H1 (cell line): ENCODE measurements at regions of chr22 and their contacts with region 1.

Region 1: DNA sequence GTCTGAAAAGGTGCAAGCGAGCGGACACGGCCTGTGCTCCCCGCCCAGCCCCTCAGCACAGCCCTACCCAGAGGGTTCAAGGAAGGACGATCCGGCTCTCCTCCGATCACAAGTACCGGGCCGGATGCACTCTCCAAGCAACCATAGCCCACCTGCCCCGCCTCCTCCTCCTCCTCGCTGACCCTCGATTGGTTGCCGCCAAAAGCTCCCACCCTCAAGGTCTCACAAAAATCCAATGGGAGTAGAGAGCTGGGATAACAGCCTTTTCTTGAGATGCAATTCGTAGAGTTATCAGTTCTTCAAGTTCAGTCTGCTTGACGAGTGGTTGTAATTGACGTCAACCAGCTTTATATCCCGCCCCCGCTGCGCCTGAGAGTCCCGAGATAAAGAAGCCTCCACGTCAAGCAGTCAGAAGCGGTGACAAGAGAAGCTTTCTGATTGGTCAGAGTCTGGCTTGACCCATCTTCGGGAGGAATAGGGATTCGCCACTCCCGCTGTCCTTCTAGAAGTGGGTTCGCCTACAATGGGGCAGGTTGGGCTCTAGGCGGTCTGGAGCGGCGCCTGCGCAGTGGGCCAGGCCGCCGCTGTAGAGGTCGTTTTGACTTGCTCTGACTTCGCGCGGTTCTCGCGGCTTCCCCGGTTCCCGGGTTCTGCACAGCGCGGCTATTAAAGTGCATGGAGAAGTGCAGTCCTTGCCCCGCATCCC is at the start of gene IFT27:
- DNase-seq: peak; percentile 92 to 98
- H3K4me3 ChIP-seq: peak within 1 kb of the TSS; percentile 80 to 96 (median 85)
- H3K27ac ChIP-seq: no peak within 1 kb of the TSS
- H3K4me1 ChIP-seq: peaks cover 0 to 4% (median 4%) of the 10 kb centered on the region in 4 experiments; a peak in 6 of 7 replicates
- H3K27me3 ChIP-seq: peaks cover 0 to 10% (median 7%) of the 10 kb centered on the region in 4 experiments; a peak in 4 of 7 replicates
- CTCF ChIP-seq: no peak
- EP300 ChIP-seq: no peak
- POLR2A ChIP-seq: peak in 1 of 2 experiments; percentile 59; a peak in 1 of 3 replicates
- RAD21 ChIP-seq: no peak
- total RNA-seq, gene IFT27: 44.0 and 46.2 TPM in 2 replicates

Region 2: GRCh38 chr22:36546092-36546804 is 229.9 kb before region 1 on chr22:
- CTCF ChIA-PET with region 1: interaction called, 20 read pairs
- POLR2A ChIA-PET with region 1: no interaction called
- DNase-seq: peak; percentile 51 to 65
- H3K4me3 ChIP-seq: peak overlapping the region in 1 of 4 experiments; percentile 18; a peak in 2 of 8 replicates
- H3K27ac ChIP-seq: no peak overlapping the region
- H3K4me1 ChIP-seq: peaks cover 0 to 12% (median 3%) of the 10 kb centered on the region in 4 experiments; a peak in 4 of 7 replicates
- H3K27me3 ChIP-seq: no peaks in the 10 kb centered on the region; a peak in 2 of 7 replicates
- CTCF ChIP-seq: peak; percentile 78 to 89 (median 81)
- EP300 ChIP-seq: no peak
- POLR2A ChIP-seq: no peak
- RAD21 ChIP-seq: peak; percentile 89 to 90

Region 3: DNA sequence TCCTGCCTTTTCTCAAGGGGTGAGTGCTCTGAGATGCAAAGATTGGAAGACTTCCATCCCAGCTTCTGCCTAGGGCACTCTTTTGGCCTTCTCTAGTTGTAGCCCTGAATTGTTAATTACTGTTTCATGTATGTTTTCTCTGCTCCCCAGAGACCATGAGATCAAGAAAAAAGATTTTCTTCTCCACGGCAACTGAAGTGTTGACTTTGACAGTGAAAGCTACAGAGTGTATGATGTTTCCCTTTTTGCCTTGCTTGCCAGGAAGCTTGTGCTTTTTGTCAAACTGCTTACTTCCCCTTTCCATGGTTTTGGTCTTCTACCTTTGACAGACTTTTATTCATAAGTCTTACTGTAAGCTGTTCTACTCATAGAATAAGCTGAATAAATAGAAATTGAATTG is 223.8 kb before region 1 on chr22:
- CTCF ChIA-PET with region 1: interaction called, 20 read pairs
- POLR2A ChIA-PET with region 1: no interaction called
- DNase-seq: no peak
- H3K4me3 ChIP-seq: no peak overlapping the region
- H3K27ac ChIP-seq: no peak overlapping the region
- H3K4me1 ChIP-seq: peaks cover 0 to 9% (median 3%) of the 10 kb centered on the region in 4 experiments; a peak in 3 of 7 replicates
- H3K27me3 ChIP-seq: no peaks in the 10 kb centered on the region
- CTCF ChIP-seq: no peak
- EP300 ChIP-seq: no peak
- POLR2A ChIP-seq: no peak
- RAD21 ChIP-seq: no peak

Region 4: DNA sequence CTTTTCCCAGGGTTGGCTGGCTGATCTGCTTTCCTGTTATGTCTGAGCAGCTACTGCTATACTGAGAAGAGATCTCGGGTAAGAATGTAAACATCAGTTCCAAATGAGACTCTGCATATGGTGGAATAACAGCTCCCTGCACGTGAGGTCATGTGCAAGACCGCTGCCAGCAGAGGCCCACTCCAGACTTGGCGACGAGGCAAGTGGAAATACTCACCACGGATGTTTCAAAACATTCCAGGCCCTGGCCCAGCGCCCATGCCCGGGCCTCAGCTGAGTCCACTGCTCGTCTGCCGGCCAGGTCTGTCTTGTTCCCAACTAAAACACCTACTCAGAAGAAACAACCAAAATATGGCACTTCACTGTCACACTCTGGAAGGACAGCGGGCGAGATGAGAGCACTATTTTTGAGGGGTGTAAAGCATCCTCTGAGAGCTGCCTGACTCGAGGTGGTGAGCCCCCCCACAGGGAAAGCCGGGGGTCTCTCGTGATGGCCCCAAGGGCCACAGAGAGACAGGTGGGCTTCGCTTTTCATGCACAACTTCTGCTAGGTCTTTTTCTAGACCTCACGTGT is 13.3 kb before region 1 on chr22:
- CTCF ChIA-PET with region 1: interaction called, 39 read pairs
- POLR2A ChIA-PET with region 1: interaction called, 3 read pairs
- DNase-seq: no peak
- H3K4me3 ChIP-seq: no peak overlapping the region
- H3K27ac ChIP-seq: no peak overlapping the region
- H3K4me1 ChIP-seq: no peaks in the 10 kb centered on the region; a peak in 1 of 7 replicates
- H3K27me3 ChIP-seq: no peaks in the 10 kb centered on the region
- CTCF ChIP-seq: no peak
- EP300 ChIP-seq: no peak
- POLR2A ChIP-seq: no peak
- RAD21 ChIP-seq: no peak

Region 5: GRCh38 chr22:36828815-36829214 is 52.7 kb after region 1 on chr22:
- CTCF ChIA-PET with region 1: no interaction called
- POLR2A ChIA-PET with region 1: no interaction called
- DNase-seq: no peak
- H3K4me3 ChIP-seq: no peak overlapping the region
- H3K27ac ChIP-seq: no peak overlapping the region
- H3K4me1 ChIP-seq: no peaks in the 10 kb centered on the region
- H3K27me3 ChIP-seq: no peaks in the 10 kb centered on the region; a peak in 1 of 7 replicates
- CTCF ChIP-seq: no peak
- EP300 ChIP-seq: no peak
- POLR2A ChIP-seq: no peak
- RAD21 ChIP-seq: no peak